Heart left ventricle (tissue), 16 donors: ENCODE measurements at regions of chr6 and their contacts with region 1.

Region 1: GRCh38 chr6:291697-292505 is at the start of gene DUSP22:
- DNase-seq: peak; percentile 91 to 94 (median 93)
- ATAC-seq: peak; percentile 70 to 93 (median 88)
- H3K4me3 ChIP-seq: peak within 1 kb of the TSS; percentile 55 to 87 (median 71)
- H3K27ac ChIP-seq: peak within 1 kb of the TSS; percentile 89 to 99 (median 96)
- H3K4me1 ChIP-seq: peaks cover 0 to 76% (median 20%) of the 10 kb centered on the region in 12 donors
- H3K27me3 ChIP-seq: no peaks in the 10 kb centered on the region
- CTCF ChIP-seq: peak in 1 of 12 donors; percentile 27
- POLR2A ChIP-seq: peak; percentile 16 to 78
- total RNA-seq, gene DUSP22: 40.4 to 79.9 (median 48.2) TPM

Region 2: DNA sequence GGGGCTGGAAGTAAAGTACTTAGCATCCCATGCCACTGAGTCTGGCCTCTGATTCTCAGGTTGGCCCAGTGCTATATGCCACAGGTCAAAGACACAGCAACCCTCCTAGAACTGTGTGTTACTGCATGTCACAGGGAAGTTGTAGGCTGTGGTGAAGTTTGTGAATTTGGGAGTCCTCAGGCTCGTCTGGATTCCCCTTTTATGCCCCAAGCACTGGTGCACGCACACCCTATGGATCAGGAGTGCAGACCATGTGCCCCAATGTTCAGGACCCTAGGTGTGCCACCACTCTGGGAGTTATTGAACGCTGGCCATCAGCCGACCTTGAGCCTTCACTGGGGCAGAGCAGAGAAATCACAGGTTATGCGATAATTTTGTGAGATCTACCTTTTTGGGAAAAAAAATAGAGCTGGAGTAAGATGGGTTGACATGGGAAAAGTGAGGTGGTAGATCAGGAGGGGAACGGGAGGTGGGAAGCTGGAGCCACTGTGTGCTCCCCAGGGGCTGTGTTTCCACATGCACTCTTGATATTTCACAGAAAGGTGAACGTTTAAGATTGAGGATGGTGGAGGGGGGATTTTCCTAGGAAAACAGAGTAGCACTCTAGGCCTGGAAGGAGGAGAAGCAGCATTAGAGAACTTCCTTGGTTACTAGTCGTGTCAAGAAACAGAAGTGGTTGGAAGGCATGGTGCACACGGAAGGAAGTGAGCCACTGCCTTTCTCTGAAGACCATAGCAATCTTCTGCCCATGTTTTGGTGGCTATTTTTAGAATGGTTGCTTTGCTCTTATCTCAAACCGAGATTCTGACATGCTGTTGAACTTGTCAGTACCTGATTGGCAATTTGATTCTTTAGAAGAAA is 44.5 kb after region 1 on chr6:
- intact Hi-C with region 1: loop called in 1 of 10 experiments (anchors 5 kb)
- DNase-seq: no peak
- ATAC-seq: peak in 3 of 4 donors; percentile 32 to 50 (median 33)
- H3K4me3 ChIP-seq: no peak overlapping the region
- H3K27ac ChIP-seq: peak overlapping the region in 1 of 12 donors; percentile 73
- H3K4me1 ChIP-seq: peaks cover 0 to 91% (median 31%) of the 10 kb centered on the region in 12 donors
- H3K27me3 ChIP-seq: no peaks in the 10 kb centered on the region
- CTCF ChIP-seq: no peak
- POLR2A ChIP-seq: no peak

Region 3: DNA sequence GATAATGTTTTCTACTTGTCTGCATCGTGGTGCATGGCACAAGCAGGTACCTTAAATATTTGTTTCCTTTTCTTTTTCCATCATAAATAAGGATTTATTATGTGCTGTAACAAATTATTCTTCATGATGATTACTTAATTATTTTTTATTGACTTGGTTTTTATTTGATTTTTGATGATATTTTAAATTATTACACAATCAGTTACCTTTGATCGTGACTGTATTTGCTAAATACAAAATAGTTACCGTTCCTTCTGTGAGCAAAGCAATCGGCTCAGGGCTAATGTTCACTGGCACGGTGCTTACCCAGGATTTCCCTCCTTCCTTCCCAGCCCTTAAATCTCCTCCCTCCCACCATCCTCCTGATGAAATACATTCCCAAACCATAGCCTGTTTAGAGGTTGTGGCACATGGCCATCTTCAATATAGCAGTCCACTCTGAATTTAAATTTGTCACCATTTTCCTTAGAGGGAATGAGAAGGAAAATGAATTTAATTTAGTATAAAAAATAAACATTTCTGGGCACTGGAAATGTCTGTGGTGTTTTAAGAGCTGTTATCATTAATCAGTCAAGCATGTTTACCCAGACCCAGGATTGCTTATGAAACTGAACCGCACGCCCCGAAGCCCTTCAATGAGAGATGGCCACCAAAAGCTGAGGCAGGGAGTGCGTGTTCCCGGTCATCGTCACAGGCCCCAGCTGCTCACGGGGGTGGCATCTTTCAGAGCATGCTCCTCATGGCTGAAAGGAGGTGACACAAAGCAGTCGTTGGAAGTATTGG is 424.0 kb after region 1 on chr6:
- intact Hi-C with region 1: loop called in 1 of 10 experiments (anchors 5 kb)
- DNase-seq: no peak
- ATAC-seq: no peak
- H3K4me3 ChIP-seq: no peak overlapping the region
- H3K27ac ChIP-seq: no peak overlapping the region
- H3K4me1 ChIP-seq: peaks cover 0 to 8% (median 0%) of the 10 kb centered on the region in 12 donors
- H3K27me3 ChIP-seq: no peaks in the 10 kb centered on the region
- CTCF ChIP-seq: no peak
- POLR2A ChIP-seq: no peak